ENCODE measurements at regions of chr4 and their contacts with region 1.

Region 1: GRCh38 chr4:182143822-182144625 is 99.2 kb upstream of the TENM3 start:
- DNase-seq: peak; percentile 88
- H3K4me3 ChIP-seq: peak overlapping the region; percentile 67 to 88 (median 71)
- H3K27ac ChIP-seq: peak overlapping the region; percentile 99
- H3K4me1 ChIP-seq: peaks cover 25% of the 10 kb centered on the region
- H3K27me3 ChIP-seq: no peaks in the 10 kb centered on the region
- CTCF ChIP-seq: no peak

Region 2: GRCh38 chr4:181796502-181796901 is 347.5 kb before region 1 on chr4:
- CTCF ChIA-PET with region 1: no interaction called
- dilution Hi-C with region 1: no loop called
- in situ Hi-C with region 1: no loop called
- intact Hi-C with region 1: loop called (anchors 2 kb)
- DNase-seq: peak; percentile 98
- H3K4me3 ChIP-seq: no peak overlapping the region
- H3K27ac ChIP-seq: peak overlapping the region; percentile 61
- H3K4me1 ChIP-seq: peaks cover 17% of the 10 kb centered on the region
- H3K27me3 ChIP-seq: no peaks in the 10 kb centered on the region
- CTCF ChIP-seq: no peak

Region 3: GRCh38 chr4:181952478-181952877 is 191.5 kb before region 1 on chr4:
- CTCF ChIA-PET with region 1: no interaction called
- dilution Hi-C with region 1: no loop called
- in situ Hi-C with region 1: no loop called
- intact Hi-C with region 1: loop called (anchors 5 kb)
- DNase-seq: peak; percentile 90
- H3K4me3 ChIP-seq: no peak overlapping the region
- H3K27ac ChIP-seq: peak overlapping the region; percentile 62
- H3K4me1 ChIP-seq: peaks cover 28% of the 10 kb centered on the region
- H3K27me3 ChIP-seq: no peaks in the 10 kb centered on the region
- CTCF ChIP-seq: no peak

Region 4: DNA sequence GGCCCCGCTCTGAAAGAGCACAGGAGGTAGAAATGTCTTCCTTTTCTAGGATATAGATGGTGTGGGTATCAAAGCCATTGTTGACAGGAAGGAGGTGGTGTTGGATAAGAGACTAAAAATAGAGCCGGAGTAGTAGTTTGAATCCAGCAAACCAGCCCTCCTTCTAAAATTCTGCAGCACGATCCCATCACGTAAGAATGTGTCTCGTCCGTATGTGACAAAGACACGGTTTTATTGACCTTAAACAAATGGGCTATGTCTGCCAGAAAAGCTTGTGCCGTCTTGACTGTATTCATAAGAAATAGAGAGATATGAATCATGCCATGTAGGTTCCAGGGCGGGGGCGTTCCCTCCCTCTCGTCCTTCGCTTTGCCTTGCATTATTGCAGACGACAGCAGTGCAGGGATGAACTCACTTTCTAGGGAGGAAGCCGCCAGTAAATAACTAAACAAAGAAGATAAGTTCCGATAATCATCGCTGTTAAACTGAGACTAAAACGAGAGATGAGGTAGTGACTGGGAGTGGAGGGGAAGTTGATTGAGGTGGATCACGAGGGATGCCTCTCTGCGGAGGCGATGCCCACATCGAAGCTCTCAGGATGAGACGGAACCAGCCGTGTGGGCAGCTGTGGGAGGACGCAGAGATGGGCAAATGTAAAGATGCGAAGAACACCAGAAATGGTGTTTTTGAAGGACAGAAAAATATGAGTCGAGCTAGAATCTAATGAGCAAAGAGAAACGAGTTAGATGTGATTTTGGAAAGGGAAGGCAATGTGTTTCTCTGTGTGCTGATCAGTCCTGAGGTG is 102.6 kb after region 1 on chr4:
- CTCF ChIA-PET with region 1: no interaction called
- dilution Hi-C with region 1: no loop called
- in situ Hi-C with region 1: loop called in 1 of 2 experiments (anchors 5 kb)
- intact Hi-C with region 1: loop called (anchors 2 kb)
- DNase-seq: peak; percentile 86
- H3K4me3 ChIP-seq: peak overlapping the region; percentile 37 to 42 (median 38)
- H3K27ac ChIP-seq: peak overlapping the region; percentile 75
- H3K4me1 ChIP-seq: peaks cover 47% of the 10 kb centered on the region
- H3K27me3 ChIP-seq: no peaks in the 10 kb centered on the region
- CTCF ChIP-seq: no peak

Region 5: DNA sequence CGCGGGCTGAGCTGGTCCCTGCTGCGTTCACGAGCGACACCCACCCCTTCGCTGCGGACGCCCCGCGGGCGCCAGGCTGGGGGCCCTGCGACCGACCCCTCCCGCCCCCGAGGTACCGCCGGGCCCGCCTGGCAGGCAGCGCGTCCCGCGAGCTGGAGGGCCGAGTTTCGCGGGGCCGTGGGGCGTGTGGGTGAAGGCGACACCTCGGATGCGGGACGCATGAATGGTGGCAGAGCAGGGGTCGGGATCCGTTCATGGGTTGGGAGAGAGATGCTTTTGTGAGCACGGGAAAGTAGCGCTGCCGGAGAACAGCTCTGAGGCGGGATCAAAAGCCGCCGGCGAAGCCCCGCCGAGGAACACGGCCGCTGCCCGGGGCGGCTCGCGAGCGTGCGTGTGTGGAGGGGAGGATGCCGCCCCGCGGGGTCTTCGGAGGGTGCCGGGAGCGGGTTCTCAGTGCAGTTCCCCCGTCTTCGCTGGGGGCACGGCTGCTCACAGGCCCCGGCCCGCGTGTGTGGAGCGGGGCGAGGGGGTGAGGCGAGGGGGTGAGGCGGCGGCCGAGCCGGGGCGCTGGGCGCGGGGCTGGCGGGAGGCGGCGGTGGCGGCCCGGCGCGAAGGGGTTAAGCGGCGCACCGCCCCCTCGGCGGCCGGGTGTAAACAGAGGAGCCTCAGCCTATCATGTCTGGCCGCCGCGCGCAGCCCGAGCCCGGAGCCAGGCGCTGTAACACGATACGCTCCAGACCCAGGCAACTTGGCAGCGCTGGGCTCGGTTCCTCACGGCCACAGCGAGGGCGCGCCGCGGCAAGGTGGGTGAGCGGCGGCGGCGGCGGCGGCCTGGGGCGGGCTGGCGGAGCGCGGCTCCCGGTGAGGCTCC is 304.5 kb after region 1 on chr4:
- CTCF ChIA-PET with region 1: no interaction called
- dilution Hi-C with region 1: no loop called
- in situ Hi-C with region 1: loop called in 1 of 2 experiments (anchors 25 kb)
- intact Hi-C with region 1: loop called (anchors 1 kb)
- DNase-seq: peak; percentile 89
- H3K4me3 ChIP-seq: peak overlapping the region; percentile 63 to 96 (median 88)
- H3K27ac ChIP-seq: peak overlapping the region; percentile 64
- H3K4me1 ChIP-seq: peaks cover 17% of the 10 kb centered on the region
- H3K27me3 ChIP-seq: no peaks in the 10 kb centered on the region
- CTCF ChIP-seq: no peak

Region 6: DNA sequence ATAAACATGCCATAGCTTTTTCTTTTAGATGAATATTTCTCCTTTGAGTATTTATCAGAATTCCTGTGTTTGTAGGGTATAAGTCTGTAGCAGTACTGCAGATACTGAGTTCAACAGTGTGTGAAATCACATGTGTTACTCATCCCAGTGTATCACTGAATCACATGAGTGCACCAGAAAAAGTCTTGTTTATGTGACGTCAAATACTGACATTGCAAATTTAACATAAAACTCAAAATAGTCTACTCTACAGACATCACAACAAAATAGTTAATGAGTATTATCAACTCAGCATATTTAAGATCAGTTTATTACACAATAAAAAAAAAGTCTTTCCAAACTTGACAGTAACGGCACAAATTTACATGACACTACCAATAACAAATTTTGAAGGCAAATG is 551.8 kb after region 1 on chr4:
- CTCF ChIA-PET with region 1: no interaction called
- dilution Hi-C with region 1: no loop called
- in situ Hi-C with region 1: no loop called
- intact Hi-C with region 1: no loop called
- DNase-seq: no peak
- H3K4me3 ChIP-seq: no peak overlapping the region
- H3K27ac ChIP-seq: no peak overlapping the region
- H3K4me1 ChIP-seq: no peaks in the 10 kb centered on the region
- H3K27me3 ChIP-seq: no peaks in the 10 kb centered on the region
- CTCF ChIP-seq: no peak

Measured in mammary epithelial cell (primary cell).